Caki2 (cell line): ENCODE measurements at regions of chr5 and their contacts with region 1.

Region 1: GRCh38 chr5:168404365-168404764 is 81.9 kb upstream of the RARS1 start:
- DNase-seq: no peak

Region 2: GRCh38 chr5:168123631-168124528 is 280.5 kb before region 1 on chr5:
- in situ Hi-C with region 1: no loop called
- DNase-seq: no peak

Region 3: DNA sequence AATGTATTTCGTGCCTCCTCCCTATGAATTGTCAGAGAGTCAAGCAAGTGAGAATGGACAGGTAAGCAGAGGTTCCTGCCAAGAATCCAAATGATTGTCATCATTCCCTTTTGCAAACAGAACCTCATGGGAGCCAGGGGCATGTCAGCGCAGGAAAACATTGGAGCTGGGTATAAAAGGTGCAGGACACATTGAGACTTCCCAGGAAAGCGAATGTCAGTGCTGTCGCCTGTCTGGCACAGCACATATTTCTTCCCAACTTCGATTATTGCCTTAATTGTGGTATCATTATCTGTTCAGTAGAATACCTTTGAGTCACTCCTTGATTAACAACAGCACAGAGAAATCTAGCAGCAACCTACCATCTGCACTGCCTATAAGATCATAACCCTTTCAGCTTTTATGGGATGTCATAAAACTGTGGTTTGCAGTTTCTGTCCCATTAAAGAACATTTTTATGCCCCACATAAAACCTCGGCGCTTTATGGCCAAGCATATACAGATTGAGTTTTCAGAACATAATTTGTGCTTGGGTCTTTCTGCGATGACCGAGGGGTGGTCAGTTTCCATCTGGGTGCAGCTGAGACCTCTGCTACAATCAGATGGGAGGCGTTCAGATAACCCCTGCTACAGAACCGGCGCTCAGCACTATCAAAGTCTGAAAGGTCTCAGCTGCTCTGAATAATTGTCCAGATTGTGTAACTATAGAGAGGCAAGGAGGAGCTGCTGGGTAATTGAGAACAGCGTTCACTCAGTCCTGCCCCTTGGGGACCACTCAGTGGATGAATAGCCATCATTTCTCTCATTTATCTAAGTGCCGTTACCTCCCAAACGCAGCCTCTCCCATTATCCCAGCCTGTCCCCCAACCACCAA is 143.8 kb before region 1 on chr5:
- in situ Hi-C with region 1: no loop called
- DNase-seq: no peak

Region 4: GRCh38 chr5:168317521-168318147 is 86.7 kb before region 1 on chr5:
- in situ Hi-C with region 1: no loop called
- DNase-seq: peak; percentile 78

Region 5: DNA sequence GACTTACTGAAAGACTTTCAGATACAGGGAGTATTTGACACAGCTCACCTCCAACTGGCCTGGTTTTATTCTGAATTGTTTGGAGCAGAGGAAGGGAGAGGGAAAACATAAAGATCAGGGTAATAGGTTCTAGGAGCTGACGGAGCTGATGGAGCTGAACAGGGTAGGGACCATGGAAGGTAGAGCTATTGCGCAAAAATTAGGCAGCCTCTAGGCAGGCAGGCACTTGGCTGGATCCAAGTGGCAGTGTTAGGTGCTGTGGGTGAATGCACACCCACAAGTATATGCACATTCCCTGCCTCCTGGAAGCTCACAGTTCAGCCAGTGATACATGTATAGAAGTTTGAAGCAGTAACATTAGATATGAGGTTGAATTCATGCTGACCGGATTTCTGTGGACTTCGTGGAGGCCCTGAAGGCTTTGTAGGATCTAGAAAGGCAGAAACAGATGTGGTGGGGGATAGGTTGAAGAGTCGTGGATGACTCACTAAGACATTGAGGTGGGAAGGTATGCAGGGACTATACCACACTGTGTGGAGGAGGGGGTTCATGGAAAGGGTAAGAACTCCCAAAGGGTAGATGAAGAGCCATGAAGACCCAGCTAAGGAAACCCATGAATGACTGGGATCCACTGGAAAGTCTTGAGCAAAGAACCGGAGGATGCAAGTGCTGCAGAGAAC is 62.1 kb before region 1 on chr5:
- in situ Hi-C with region 1: loop called (anchors 5 kb)
- DNase-seq: no peak